ENCODE measurements at regions of chr20 and their contacts with region 1.

Region 1: DNA sequence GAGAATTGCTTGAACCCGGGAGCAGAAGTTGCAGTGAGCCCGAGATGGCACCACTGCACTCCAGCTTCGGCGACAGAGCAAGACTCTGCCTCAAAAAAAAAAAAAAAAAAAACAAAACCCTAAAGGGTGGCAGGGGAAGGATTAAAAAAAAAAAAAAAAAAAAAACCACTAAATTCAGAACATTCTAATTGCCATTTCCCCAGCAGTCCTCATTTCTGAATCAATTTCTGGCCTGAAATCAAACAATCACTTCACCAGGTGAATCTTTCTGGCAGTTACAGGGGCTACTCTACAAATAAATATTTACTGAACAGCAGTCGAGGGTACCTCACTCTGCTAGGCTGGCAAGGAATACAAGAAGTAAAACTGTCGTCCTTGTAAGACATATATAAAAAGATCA is 1.2 kb downstream of the UQCC1 start:
- DNase-seq: no peak
- H3K4me3 ChIP-seq: peak overlapping the region in 1 of 2 donors; percentile 61
- H3K4me3 Mint-ChIP-seq: peak overlapping the region in 7 of 8 donors; percentile 97 to 100 (median 98)
- H3K27ac ChIP-seq: no peak overlapping the region
- H3K27ac Mint-ChIP-seq: peak overlapping the region in 6 of 7 donors; percentile 20 to 100 (median 94)
- H3K4me1 ChIP-seq: peaks cover 14% of the 10 kb centered on the region
- H3K4me1 Mint-ChIP-seq: peaks cover 11 to 17% (median 15%) of the 10 kb centered on the region in 4 donors
- H3K27me3 ChIP-seq: no peaks in the 10 kb centered on the region
- H3K27me3 Mint-ChIP-seq: peaks cover 0 to 2% of the 10 kb centered on the region in 2 donors

Region 2: DNA sequence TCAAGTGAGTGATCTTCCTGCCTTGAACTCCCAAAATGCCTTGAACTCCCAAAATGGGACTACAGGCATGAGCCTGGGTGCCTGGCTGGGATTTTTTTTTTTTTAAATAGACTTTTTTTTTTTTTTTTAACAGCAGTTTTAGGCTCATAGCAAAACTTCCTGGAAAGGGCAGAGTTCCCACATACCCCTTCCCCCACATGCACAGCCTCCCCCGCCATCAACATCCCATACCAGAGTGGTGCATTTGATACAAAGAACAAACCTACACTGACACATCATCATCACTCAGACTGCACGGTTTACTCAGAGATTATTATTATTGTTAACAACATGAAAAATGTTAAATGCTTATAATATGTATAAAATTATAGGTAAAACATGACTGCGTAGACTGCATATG is 24.9 kb before region 1 on chr20:
- CTCF ChIA-PET with region 1: no interaction called
- POLR2A ChIA-PET with region 1: no interaction called
- intact Hi-C with region 1: no loop called
- DNase-seq: no peak
- H3K4me3 ChIP-seq: no peak overlapping the region
- H3K4me3 Mint-ChIP-seq: no peak overlapping the region
- H3K27ac ChIP-seq: no peak overlapping the region
- H3K27ac Mint-ChIP-seq: no peak overlapping the region
- H3K4me1 ChIP-seq: no peaks in the 10 kb centered on the region
- H3K4me1 Mint-ChIP-seq: peaks cover 4 to 12% (median 10%) of the 10 kb centered on the region in 4 donors
- H3K27me3 ChIP-seq: no peaks in the 10 kb centered on the region
- H3K27me3 Mint-ChIP-seq: no peaks in the 10 kb centered on the region

Region 3: GRCh38 chr20:35447082-35447789 is 36.6 kb after region 1 on chr20:
- CTCF ChIA-PET with region 1: interaction called, 4 read pairs
- POLR2A ChIA-PET with region 1: no interaction called
- intact Hi-C with region 1: loop called (anchors 2 kb)
- DNase-seq: peak; percentile 80 to 84 (median 83)
- H3K4me3 ChIP-seq: peak overlapping the region in 1 of 2 donors; percentile 44
- H3K4me3 Mint-ChIP-seq: peak overlapping the region; percentile 80 to 94 (median 87)
- H3K27ac ChIP-seq: no peak overlapping the region
- H3K27ac Mint-ChIP-seq: peak overlapping the region in 4 of 7 donors; percentile 54 to 82 (median 76)
- H3K4me1 ChIP-seq: no peaks in the 10 kb centered on the region
- H3K4me1 Mint-ChIP-seq: peaks cover 0 to 3% (median 3%) of the 10 kb centered on the region in 4 donors
- H3K27me3 ChIP-seq: no peaks in the 10 kb centered on the region
- H3K27me3 Mint-ChIP-seq: peaks cover 3% of the 10 kb centered on the region in 2 donors

Region 4: GRCh38 chr20:35454881-35455609 is 44.4 kb after region 1 on chr20 and contains the start of gene CEP250:
- CTCF ChIA-PET with region 1: no interaction called
- POLR2A ChIA-PET with region 1: interaction called, 11 read pairs
- intact Hi-C with region 1: loop called (anchors 2 kb)
- DNase-seq: peak; percentile 94 to 96 (median 96)
- H3K4me3 ChIP-seq: peak within 1 kb of the TSS; percentile 80 to 82
- H3K4me3 Mint-ChIP-seq: peak within 1 kb of the TSS; percentile 92 to 99 (median 97)
- H3K27ac ChIP-seq: peak within 1 kb of the TSS; percentile 95
- H3K27ac Mint-ChIP-seq: peak within 1 kb of the TSS; percentile 95 to 99 (median 98)
- H3K4me1 ChIP-seq: no peaks in the 10 kb centered on the region
- H3K4me1 Mint-ChIP-seq: peaks cover 7 to 29% (median 19%) of the 10 kb centered on the region in 4 donors
- H3K27me3 ChIP-seq: no peaks in the 10 kb centered on the region
- H3K27me3 Mint-ChIP-seq: no peaks in the 10 kb centered on the region
- total RNA-seq, gene CEP250: 71.3 to 76.9 TPM

Region 5: GRCh38 chr20:35629427-35630145 is 219.0 kb after region 1 on chr20:
- CTCF ChIA-PET with region 1: no interaction called
- POLR2A ChIA-PET with region 1: no interaction called
- intact Hi-C with region 1: no loop called
- DNase-seq: no peak
- H3K4me3 ChIP-seq: no peak overlapping the region
- H3K4me3 Mint-ChIP-seq: no peak overlapping the region
- H3K27ac ChIP-seq: no peak overlapping the region
- H3K27ac Mint-ChIP-seq: peak overlapping the region in 1 of 7 donors; percentile 40
- H3K4me1 ChIP-seq: no peaks in the 10 kb centered on the region
- H3K4me1 Mint-ChIP-seq: peaks cover 0 to 6% (median 3%) of the 10 kb centered on the region in 4 donors
- H3K27me3 ChIP-seq: no peaks in the 10 kb centered on the region
- H3K27me3 Mint-ChIP-seq: no peaks in the 10 kb centered on the region

Region 6: GRCh38 chr20:36235892-36236785 is 825.5 kb after region 1 on chr20 and contains the start of gene AAR2:
- CTCF ChIA-PET with region 1: no interaction called
- POLR2A ChIA-PET with region 1: interaction called, 4 read pairs
- intact Hi-C with region 1: loop called (anchors 5 kb)
- DNase-seq: peak; percentile 74 to 78 (median 74)
- H3K4me3 ChIP-seq: peak within 1 kb of the TSS; percentile 62 to 93
- H3K4me3 Mint-ChIP-seq: peak within 1 kb of the TSS; percentile 91 to 98 (median 96)
- H3K27ac ChIP-seq: peak within 1 kb of the TSS; percentile 69
- H3K27ac Mint-ChIP-seq: peak within 1 kb of the TSS; percentile 72 to 97 (median 95)
- H3K4me1 ChIP-seq: peaks cover 45% of the 10 kb centered on the region
- H3K4me1 Mint-ChIP-seq: peaks cover 22 to 53% (median 35%) of the 10 kb centered on the region in 4 donors
- H3K27me3 ChIP-seq: no peaks in the 10 kb centered on the region
- H3K27me3 Mint-ChIP-seq: peaks cover 0 to under 1% of the 10 kb centered on the region in 2 donors
- total RNA-seq, gene AAR2: 21.7 to 23.0 TPM